Right cardiac atrium (tissue), 5 donors: ENCODE measurements at regions of chr3 and their contacts with region 1.

Region 1: DNA sequence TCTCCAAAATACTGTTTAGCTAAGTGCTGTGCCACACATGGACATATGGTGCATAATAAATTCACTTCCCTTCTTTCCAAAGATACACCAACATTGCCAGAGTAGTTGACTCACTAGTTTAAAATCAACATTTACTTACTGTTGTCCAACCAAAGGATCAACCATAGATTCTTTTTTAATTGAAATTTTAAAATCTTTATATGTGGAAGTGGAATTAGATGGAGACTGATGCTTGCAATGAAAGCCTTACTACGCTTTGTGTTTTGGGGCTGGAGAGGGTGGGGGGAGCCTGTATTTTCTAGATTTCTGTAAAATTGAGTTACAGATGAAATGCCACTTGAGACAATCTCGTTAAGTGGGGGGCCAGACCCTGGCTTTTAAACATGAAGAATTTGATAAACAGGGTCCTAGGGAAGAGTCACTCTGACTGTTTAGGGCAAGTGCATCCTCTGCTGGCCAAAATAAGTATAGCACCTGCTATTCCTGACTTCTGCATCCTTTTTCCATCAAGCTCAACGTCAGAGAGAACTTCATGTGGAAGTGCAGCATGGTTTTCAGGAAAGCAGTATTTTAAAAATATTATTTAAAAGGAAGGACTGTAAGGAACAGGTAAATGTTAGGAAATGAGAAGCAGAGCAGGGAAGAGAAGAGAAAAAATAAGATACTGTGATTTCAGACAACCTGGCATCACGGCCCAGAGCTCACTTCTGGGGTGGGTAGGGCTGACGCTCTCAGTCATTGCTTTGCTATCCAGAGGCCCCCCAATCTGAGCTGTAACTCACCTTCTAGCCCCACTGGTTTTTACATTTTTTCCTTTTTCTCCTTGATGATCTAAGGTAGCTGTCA is 76.7 kb downstream of the BOC start:
- DNase-seq: no peak
- ATAC-seq: peak; percentile 42 to 47
- H3K4me3 ChIP-seq: no peak overlapping the region
- H3K27ac ChIP-seq: no peak overlapping the region
- H3K4me1 ChIP-seq: no peaks in the 10 kb centered on the region
- H3K27me3 ChIP-seq: no peaks in the 10 kb centered on the region

Region 2: DNA sequence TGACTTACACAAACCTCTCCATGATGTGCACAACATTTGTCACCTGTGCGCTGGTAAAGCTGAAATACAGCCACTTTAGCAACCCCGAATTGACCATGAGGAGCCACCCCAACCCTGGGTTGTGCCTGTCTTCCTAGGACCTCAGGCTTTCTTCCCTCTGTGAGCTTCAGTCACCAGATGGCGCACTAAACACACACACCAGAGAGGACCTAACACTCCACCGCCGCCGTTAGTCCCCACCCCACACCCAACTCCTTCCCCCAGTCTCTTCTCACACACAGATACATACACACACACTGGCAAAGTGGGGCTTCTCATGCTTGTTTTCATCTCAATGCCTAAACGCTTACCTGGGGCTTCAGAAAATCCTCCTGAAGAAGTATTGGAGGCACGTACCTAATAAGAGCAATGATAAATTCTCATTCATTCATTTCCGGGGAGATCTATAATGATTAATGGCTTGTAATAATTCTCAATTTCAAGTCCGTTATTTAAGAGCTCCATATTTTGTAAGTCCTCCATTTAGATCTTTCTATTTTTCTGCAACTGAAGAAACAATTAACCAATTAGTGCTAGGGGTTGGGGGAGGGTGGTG is 645.0 kb before region 1 on chr3:
- intact Hi-C with region 1: no loop called
- DNase-seq: peak; percentile 86 to 92 (median 88)
- ATAC-seq: peak; percentile 88 to 90
- H3K4me3 ChIP-seq: no peak overlapping the region
- H3K27ac ChIP-seq: no peak overlapping the region
- H3K4me1 ChIP-seq: no peaks in the 10 kb centered on the region
- H3K27me3 ChIP-seq: no peaks in the 10 kb centered on the region

Region 3: DNA sequence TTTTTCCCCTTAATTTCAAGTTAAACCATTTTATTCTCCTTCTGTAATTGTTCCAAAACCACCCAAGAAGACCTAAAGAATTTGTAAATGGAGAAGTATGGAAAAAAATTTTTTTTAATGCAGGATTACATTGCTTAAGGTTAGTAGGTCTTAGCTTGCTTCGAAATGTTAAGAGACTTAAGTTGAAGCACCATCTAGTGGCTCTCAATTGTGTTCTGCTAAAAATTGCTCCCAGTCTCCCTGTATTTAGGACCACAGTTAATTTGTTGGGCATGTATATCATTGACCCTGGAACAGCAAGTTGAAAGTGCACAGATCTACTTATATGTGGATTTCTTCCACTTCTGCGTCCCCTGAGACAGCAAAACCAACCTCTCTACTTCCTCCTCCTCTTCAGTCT is 473.8 kb before region 1 on chr3:
- intact Hi-C with region 1: no loop called
- DNase-seq: no peak
- ATAC-seq: peak in 1 of 2 donors; percentile 25
- H3K4me3 ChIP-seq: no peak overlapping the region
- H3K27ac ChIP-seq: no peak overlapping the region
- H3K4me1 ChIP-seq: peaks cover 5% of the 10 kb centered on the region
- H3K27me3 ChIP-seq: no peaks in the 10 kb centered on the region

Region 4: DNA sequence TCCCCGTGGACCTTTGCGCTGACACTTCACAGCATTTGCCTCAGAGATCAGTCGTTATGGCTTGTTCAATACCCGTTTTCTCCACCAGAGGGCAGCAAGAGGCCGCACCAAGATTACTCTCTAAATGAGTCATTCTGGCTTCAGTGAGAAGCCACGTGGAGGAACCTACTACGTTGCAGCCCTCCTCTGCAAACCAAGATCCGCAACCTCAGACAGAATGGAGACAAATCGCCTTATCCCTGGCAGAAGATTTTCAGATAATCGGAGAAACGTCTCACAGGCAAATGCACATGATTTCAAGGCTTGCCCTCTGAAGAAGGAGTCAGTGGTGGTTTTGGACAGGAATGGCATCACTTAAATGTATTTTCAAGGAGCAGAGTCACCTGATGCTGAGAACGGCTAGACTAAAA is 236.7 kb before region 1 on chr3:
- intact Hi-C with region 1: loop called (anchors 2 to 10 kb)
- DNase-seq: peak; percentile 75 to 88 (median 82)
- ATAC-seq: peak; percentile 95
- H3K4me3 ChIP-seq: peak overlapping the region; percentile 25
- H3K27ac ChIP-seq: no peak overlapping the region
- H3K4me1 ChIP-seq: peaks cover 3% of the 10 kb centered on the region
- H3K27me3 ChIP-seq: no peaks in the 10 kb centered on the region

Region 5: DNA sequence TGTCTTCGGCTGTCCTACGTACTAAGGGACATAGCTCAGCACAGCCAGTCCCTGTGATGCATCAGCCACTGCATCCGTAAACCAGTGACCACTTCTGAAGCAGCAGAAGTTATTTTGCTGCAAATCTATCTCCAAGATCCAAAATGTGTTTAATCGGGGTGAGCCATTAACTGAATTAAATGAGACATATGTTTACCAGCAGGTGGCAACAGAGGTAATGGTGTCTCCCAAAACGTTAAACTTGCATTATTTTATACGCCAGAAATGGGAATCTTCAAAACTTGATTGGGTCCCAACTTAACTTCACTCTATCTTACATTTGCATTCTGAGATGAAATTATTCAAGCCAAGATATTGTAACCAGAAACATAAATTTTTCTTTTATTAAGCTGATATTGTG is 152.0 kb before region 1 on chr3:
- intact Hi-C with region 1: loop called (anchors 2 to 5 kb)
- DNase-seq: no peak
- ATAC-seq: no peak
- H3K4me3 ChIP-seq: no peak overlapping the region
- H3K27ac ChIP-seq: no peak overlapping the region
- H3K4me1 ChIP-seq: no peaks in the 10 kb centered on the region
- H3K27me3 ChIP-seq: no peaks in the 10 kb centered on the region

Region 6: DNA sequence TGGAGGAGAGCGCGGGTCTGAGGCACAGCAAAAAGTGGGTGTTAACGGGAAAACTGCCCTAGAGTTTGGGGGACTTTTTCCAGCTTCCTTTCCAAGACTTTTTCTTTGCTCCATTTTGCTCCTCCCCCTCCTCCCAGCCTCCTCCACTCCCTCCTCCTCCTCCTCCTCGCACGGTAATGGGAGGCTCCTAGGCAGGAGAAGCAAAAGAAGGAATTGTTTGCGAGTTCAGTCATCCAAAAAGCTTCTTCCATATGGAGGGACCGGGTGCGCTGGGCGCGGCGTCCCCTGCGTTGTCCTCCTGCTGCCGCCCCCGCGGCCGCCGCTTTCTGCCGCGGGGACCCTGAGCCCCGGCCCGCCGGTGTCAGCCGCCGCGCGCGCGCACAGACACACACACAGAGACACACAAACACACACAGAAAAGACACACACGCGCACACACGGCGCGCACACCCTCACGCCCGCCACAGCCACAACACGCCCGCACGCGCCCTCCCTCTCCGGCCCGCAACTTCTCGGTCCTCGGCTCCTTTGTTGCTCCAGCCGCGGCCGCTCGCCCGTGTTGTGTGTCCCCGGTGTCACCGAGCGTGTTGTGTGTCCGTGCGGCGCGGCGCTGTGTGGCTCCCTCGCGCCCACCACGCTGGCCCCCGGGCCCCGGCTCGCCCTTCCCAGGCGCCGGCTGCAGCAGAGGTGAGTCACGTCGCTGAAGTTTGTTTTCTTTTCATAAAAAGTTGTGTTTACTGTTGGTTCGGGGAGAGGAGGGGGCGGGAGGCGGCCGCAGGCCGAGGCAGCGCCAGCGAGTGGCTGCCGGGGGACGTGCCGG is 76.5 kb before region 1 on chr3 and contains the start of gene BOC:
- intact Hi-C with region 1: loop called in 1 of 4 experiments (anchors 5 kb)
- DNase-seq: peak; percentile 44 to 75 (median 75)
- ATAC-seq: peak; percentile 83 to 89
- H3K4me3 ChIP-seq: peak within 1 kb of the TSS; percentile 66
- H3K27ac ChIP-seq: peak within 1 kb of the TSS; percentile 53
- H3K4me1 ChIP-seq: no peaks in the 10 kb centered on the region
- H3K27me3 ChIP-seq: no peaks in the 10 kb centered on the region
- total RNA-seq, gene BOC: 12.9 to 45.3 (median 15.4) TPM